Stomach (tissue), 19 donors: ENCODE measurements at regions of chr20 and their contacts with region 1.

Region 1: DNA sequence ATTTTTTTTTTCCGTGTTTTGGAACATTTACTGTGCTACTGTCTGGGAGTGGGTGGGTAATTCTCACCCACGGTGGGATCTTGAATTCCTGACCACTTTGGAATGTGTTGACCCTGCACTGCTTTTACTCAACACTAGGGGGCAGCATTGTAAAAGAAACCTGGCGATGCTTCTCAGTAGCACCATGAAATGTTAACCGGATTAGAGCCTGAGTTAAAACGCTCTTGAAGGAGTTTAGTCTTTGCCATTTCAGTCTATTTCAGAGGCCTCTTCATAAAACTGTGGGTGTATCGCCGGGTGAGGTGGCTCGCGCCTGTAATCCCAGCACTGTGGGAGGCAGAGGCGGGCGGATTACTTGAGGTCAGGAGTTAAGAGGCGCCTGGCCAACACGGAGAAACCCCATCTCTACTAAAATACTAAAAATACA is 114.4 kb upstream of the PRND start:
- DNase-seq: peak; percentile 46 to 86
- H3K4me3 ChIP-seq: no peak overlapping the region
- H3K27ac ChIP-seq: peak overlapping the region in 1 of 5 donors; percentile 24
- H3K4me1 ChIP-seq: peaks cover 0 to 31% (median 7%) of the 10 kb centered on the region in 4 donors
- H3K27me3 ChIP-seq: peaks cover 0 to 14% (median 4%) of the 10 kb centered on the region in 3 donors
- CTCF ChIP-seq: peak in 6 of 7 experiments; percentile 72 to 97 (median 94)
- EP300 ChIP-seq: no peak
- POLR2A ChIP-seq: no peak

Region 2: GRCh38 chr20:2680046-2680445 is 1927.3 kb before region 1 on chr20:
- intact Hi-C with region 1: no loop called
- DNase-seq: no peak
- H3K4me3 ChIP-seq: no peak overlapping the region
- H3K27ac ChIP-seq: no peak overlapping the region
- H3K4me1 ChIP-seq: no peaks in the 10 kb centered on the region
- H3K27me3 ChIP-seq: peaks cover 0 to 4% (median 0%) of the 10 kb centered on the region in 3 donors
- CTCF ChIP-seq: no peak
- EP300 ChIP-seq: no peak
- POLR2A ChIP-seq: no peak

Region 3: GRCh38 chr20:4721719-4722118 is 114.4 kb after region 1 on chr20 and contains the start of gene PRND:
- intact Hi-C with region 1: loop called (anchors 2 kb)
- DNase-seq: no peak
- H3K4me3 ChIP-seq: no peak within 1 kb of the TSS
- H3K27ac ChIP-seq: peak within 1 kb of the TSS in 2 of 5 donors; percentile 50 to 77
- H3K4me1 ChIP-seq: peaks cover 0 to 21% (median 11%) of the 10 kb centered on the region in 4 donors
- H3K27me3 ChIP-seq: peaks cover 0 to 3% (median 0%) of the 10 kb centered on the region in 3 donors
- CTCF ChIP-seq: no peak
- EP300 ChIP-seq: no peak
- POLR2A ChIP-seq: no peak
- total RNA-seq, gene PRND: 1.1 TPM in 1 of 5 donors, not detected in the others

Region 4: DNA sequence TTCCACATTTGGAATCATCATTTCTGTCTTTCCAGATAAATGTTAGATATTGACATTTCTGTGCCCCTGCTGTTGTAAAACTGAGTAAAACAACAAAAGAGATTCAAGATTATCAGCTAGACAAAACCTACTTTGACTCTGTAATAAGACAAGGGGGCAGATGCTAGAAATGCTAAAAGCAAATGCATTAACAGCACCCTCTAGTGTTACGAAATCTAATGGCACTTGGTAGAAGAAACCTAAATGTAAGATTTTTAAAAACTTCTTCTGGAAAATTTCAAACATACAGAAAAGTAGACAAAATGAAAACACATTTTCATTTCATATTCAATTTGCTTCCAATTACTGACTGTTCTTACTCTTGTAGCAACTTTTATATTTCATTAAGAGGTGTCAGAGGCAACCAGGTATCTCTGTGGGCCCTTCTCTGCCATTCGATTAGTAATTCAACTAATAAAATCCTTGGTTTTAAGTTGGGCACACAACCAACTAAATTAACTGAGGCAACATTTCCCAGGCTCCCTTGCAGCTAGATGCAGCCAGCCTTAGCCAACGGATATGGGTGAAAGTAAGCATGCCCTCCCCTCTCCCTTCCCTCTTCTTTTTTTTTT is 349.0 kb after region 1 on chr20:
- intact Hi-C with region 1: loop called (anchors 10 kb)
- DNase-seq: peak in 1 of 2 donors; percentile 84
- H3K4me3 ChIP-seq: no peak overlapping the region
- H3K27ac ChIP-seq: no peak overlapping the region
- H3K4me1 ChIP-seq: peaks cover 0 to 12% (median 2%) of the 10 kb centered on the region in 4 donors
- H3K27me3 ChIP-seq: no peaks in the 10 kb centered on the region
- CTCF ChIP-seq: peak in 5 of 7 experiments; percentile 38 to 76 (median 73)
- EP300 ChIP-seq: no peak
- POLR2A ChIP-seq: no peak